ENCODE measurements at regions of chr15 and their contacts with region 1.

Region 1: GRCh38 chr15:73273181-73274002 is 95.4 kb downstream of the HCN4 start:
- DNase-seq: peak in 3 of 5 donors; percentile 34 to 38 (median 34)
- ATAC-seq: peak; percentile 71 to 90 (median 84)
- H3K4me3 ChIP-seq: no peak overlapping the region
- H3K27ac ChIP-seq: no peak overlapping the region
- H3K4me1 ChIP-seq: peaks cover 0 to 4% (median 0%) of the 10 kb centered on the region in 12 donors
- H3K27me3 ChIP-seq: no peaks in the 10 kb centered on the region
- CTCF ChIP-seq: peak; percentile 59 to 84 (median 75)
- POLR2A ChIP-seq: no peak

Region 2: DNA sequence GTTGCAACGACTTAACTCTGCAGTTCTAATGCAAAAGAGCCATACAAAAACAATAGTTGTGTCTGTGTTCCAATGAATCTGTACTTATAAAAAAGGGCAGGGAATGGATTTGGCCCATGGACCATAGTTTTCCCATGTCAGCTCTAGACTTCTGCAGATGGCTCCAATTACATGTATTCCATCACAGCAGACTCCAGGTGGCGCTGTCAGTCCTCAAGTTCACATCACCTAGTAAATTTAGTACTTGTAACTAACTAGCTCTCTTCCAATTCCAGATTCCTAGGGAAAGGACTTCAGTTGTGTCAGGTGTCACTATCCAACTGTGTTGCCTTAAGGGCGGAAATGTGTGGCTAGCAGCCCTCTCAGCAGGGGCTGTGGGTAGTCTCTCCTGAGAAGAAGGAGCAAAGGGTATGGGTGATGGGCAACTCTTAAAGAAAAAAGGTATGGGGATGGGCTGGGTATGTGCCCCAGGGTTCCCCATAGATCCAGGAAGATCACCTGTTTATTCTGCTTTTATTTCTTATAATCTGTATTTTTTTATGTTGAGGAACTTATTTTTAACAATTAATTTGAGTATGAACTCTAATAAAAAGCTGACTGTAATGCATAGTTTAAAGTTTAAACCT is 551.2 kb before region 1 on chr15:
- intact Hi-C with region 1: loop called in 2 of 10 experiments (anchors 5 to 10 kb)
- DNase-seq: peak; percentile 40 to 61 (median 48)
- ATAC-seq: peak in 1 of 4 donors; percentile 39
- H3K4me3 ChIP-seq: no peak overlapping the region
- H3K27ac ChIP-seq: no peak overlapping the region
- H3K4me1 ChIP-seq: no peaks in the 10 kb centered on the region
- H3K27me3 ChIP-seq: no peaks in the 10 kb centered on the region
- CTCF ChIP-seq: peak; percentile 29 to 77 (median 66)
- POLR2A ChIP-seq: no peak

Region 3: GRCh38 chr15:72783563-72784237 is 489.7 kb before region 1 on chr15 and contains the start of gene ADPGK:
- intact Hi-C with region 1: loop called in 6 of 10 experiments (anchors 5 to 10 kb)
- DNase-seq: peak; percentile 91 to 96 (median 92)
- ATAC-seq: peak; percentile 97 to 98 (median 98)
- H3K4me3 ChIP-seq: peak within 1 kb of the TSS; percentile 77 to 100 (median 90)
- H3K27ac ChIP-seq: peak within 1 kb of the TSS; percentile 78 to 98 (median 88)
- H3K4me1 ChIP-seq: peaks cover 0 to 40% (median 23%) of the 10 kb centered on the region in 12 donors
- H3K27me3 ChIP-seq: no peaks in the 10 kb centered on the region
- CTCF ChIP-seq: no peak
- POLR2A ChIP-seq: peak in 1 of 2 donors; percentile 87
- total RNA-seq, gene ADPGK: 7.1 to 31.7 (median 10.4) TPM

Region 4: GRCh38 chr15:72796515-72797337 is 476.7 kb before region 1 on chr15:
- intact Hi-C with region 1: loop called in 3 of 10 experiments (anchors 5 to 10 kb)
- DNase-seq: peak; percentile 33 to 73 (median 44)
- ATAC-seq: peak in 3 of 4 donors; percentile 87 to 97 (median 90)
- H3K4me3 ChIP-seq: peak overlapping the region; percentile 17 to 65 (median 52)
- H3K27ac ChIP-seq: peak overlapping the region in 1 of 12 donors; percentile 41
- H3K4me1 ChIP-seq: peaks cover 0 to 15% (median 0%) of the 10 kb centered on the region in 12 donors
- H3K27me3 ChIP-seq: peaks cover 0 to 50% (median 5%) of the 10 kb centered on the region in 9 donors
- CTCF ChIP-seq: peak; percentile 14 to 80 (median 68)
- POLR2A ChIP-seq: no peak

Region 5: DNA sequence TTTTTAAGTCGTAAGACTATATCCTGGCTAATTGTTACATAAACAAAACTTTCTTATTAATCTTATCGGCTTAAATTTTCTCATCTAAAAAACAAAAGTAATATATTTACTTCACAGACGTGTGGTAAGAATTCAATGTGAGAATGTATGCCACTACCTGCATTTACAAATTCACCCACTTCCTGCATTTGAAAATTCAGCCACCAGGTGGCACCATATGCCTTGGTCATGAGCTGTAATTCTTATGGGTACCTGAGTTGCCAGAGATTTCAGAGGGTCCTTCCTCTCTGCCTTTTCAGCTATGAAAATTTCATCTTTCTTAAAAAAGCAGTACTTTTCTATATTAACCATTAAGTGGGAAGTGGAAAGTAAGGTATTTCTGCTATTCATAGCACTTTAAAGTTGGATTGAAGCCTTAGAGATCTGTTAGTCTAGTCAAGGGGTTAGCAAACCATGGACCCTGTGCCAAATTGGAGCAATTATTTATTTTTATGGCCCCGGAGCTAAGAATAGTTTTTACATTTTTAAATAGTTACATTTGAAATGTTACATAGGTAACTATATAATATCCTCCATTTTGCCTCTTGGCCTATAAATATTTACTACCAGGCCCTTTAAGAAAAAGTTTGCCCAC is 32.4 kb before region 1 on chr15:
- intact Hi-C with region 1: loop called in 7 of 10 experiments (anchors 1 to 2 kb)
- DNase-seq: peak; percentile 41 to 55 (median 49)
- ATAC-seq: no peak
- H3K4me3 ChIP-seq: no peak overlapping the region
- H3K27ac ChIP-seq: no peak overlapping the region
- H3K4me1 ChIP-seq: no peaks in the 10 kb centered on the region
- H3K27me3 ChIP-seq: no peaks in the 10 kb centered on the region
- CTCF ChIP-seq: peak; percentile 77 to 93 (median 89)
- POLR2A ChIP-seq: no peak

Measured in heart left ventricle (tissue), 16 donors.